Activated CD8-positive, alpha-beta T cell treated with anti-CD3 and anti-CD28 coated beads for 36 hours (primary cell): ENCODE measurements at regions of chr4 and their contacts with region 1.

Region 1: DNA sequence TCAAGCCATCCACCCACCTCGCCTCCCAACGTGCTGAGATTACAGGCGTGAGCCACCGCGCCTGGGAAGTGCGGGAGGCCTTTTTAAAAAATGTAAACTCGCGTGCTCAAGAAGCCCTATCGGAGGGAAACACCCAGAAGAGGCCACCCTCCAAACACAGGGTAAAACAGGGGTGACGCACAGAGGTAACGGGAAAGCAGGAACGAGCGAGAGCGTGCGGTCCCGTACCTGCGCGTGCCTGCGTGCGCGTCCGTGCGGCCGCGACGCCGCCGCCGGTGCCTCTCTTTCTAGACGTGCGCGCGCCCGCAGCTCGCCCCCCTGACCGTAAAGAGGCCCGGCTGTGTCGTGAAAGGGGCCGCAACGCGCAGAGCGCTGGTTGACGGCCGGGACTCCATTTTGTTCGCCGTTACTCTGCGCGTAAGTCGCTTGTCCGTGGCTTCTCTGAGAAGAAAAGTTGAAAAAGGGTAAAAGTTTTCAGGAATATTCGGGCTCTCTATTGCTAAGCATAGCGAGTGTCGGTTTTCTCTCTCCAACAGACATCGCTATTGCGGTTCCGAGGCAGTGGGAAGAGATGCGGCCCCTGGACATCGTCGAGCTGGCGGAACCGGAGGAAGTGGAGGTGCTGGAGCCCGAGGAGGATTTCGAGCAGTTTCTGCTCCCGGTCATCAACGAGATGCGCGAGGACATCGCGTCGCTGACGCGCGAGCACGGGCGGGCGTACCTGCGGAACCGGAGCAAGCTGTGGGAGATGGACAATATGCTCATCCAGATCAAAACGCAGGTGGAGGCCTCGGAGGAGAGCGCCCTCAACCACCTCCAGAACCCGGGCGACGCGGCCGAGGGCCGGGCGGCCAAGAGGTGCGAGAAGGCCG is at the start of gene MRFAP1:
- DNase-seq: peak; percentile 96
- ATAC-seq: peak; percentile 84
- H3K4me3 Mint-ChIP-seq: peak within 1 kb of the TSS; percentile 98
- H3K27ac Mint-ChIP-seq: peak within 1 kb of the TSS; percentile 99
- H3K4me1 Mint-ChIP-seq: peaks cover 29% of the 10 kb centered on the region
- H3K27me3 Mint-ChIP-seq: no peaks in the 10 kb centered on the region
- CTCF ChIP-seq: no peak
- total RNA-seq, gene MRFAP1: 106 to 107 TPM

Region 2: GRCh38 chr4:6574747-6575502 is 65.6 kb before region 1 on chr4 and contains the start of gene MAN2B2:
- CTCF ChIA-PET with region 1: no interaction called
- POLR2A ChIA-PET with region 1: interaction called, 13 read pairs
- intact Hi-C with region 1: no loop called
- DNase-seq: peak; percentile 83
- ATAC-seq: peak; percentile 96
- H3K4me3 Mint-ChIP-seq: peak within 1 kb of the TSS; percentile 79
- H3K27ac Mint-ChIP-seq: peak within 1 kb of the TSS; percentile 83
- H3K4me1 Mint-ChIP-seq: peaks cover 4% of the 10 kb centered on the region
- H3K27me3 Mint-ChIP-seq: no peaks in the 10 kb centered on the region
- CTCF ChIP-seq: no peak
- total RNA-seq, gene MAN2B2: 10.8 to 13.0 TPM

Region 3: DNA sequence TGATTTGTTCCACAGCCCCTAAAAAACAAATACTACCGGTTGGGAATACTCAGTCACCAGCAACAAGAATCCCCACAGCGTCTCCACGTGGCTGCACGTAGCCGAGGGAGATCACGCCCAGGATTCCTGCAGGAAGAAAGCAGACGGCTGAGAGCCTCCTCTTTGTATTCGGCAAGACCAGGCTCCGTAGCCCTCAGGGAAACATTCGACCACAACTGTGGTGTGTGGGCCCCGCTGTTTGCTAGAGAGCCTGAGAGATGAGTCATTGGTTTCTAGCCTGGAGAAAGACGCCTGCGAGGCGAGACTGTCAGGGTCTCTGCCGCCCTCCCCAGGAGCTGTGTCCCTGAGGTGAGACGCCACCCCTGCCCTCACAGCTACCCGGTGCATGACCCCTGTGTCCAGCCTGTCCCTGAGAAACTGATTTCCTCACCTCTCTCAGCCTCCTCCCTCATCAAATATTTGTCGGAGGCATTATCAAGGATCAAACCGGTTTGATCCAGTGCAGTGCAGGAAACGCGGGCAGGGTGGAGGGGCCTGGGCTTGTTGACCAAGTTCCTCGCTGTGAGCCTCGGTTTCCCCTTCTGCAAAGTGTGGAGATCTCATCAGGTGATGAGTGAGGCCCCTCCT is 48.5 kb after region 1 on chr4:
- CTCF ChIA-PET with region 1: interaction called, 5 read pairs
- POLR2A ChIA-PET with region 1: interaction called, 12 read pairs
- intact Hi-C with region 1: no loop called
- DNase-seq: peak; percentile 96
- ATAC-seq: peak; percentile 85
- H3K4me3 Mint-ChIP-seq: peak overlapping the region; percentile 74
- H3K27ac Mint-ChIP-seq: peak overlapping the region; percentile 93
- H3K4me1 Mint-ChIP-seq: peaks cover 70% of the 10 kb centered on the region
- H3K27me3 Mint-ChIP-seq: no peaks in the 10 kb centered on the region
- CTCF ChIP-seq: no peak

Region 4: DNA sequence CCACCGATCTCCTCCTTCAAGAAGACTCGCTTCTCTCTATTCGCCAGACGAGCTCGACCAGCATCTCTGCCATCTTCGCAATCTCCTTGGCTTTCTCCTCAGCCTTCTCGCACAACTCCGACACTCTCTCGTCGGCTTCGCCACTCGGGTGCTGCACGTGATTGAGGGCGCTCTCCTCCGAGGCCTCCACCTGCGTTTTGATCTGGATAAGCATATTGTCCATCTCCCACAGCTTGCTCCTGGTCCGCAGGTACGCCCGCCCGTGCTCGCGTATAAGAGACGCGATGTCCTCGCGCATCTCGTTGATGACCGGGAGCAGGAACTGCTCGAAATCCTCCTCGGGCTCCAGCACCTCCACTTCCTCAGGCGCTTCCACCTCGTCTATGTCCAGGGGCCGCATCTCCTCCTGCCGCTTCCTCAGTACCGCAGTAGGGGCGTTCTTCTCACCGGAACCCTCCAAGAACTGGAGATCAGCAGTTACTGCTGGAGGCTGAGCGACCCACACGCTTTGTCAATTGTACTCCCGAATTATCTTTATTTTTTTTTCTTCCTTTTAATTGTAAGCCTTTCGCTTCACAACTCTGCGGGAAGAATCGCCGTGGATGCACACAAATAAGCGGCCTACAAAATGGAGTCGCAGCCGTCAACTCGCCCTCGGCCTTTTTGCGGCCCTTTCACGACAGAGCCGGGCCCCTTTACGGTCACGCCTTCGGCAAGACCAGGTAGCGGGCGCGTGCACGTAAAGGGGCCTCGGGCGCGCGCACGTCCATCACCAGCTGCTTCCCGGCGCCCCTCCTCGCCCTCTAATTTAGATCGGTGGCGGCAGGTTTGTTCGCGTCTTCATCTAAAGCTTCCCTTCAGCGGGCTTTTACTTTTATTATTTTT is 68.9 kb after region 1 on chr4 and contains the start of gene MRFAP1L1:
- CTCF ChIA-PET with region 1: interaction called, 5 read pairs
- POLR2A ChIA-PET with region 1: interaction called, 5 read pairs
- intact Hi-C with region 1: loop called (anchors 2 kb)
- DNase-seq: peak; percentile 99
- ATAC-seq: peak; percentile 86
- H3K4me3 Mint-ChIP-seq: peak within 1 kb of the TSS; percentile 99
- H3K27ac Mint-ChIP-seq: peak within 1 kb of the TSS; percentile 98
- H3K4me1 Mint-ChIP-seq: peaks cover 52% of the 10 kb centered on the region
- H3K27me3 Mint-ChIP-seq: no peaks in the 10 kb centered on the region
- CTCF ChIP-seq: no peak
- total RNA-seq, gene MRFAP1L1: 36.7 to 39.2 TPM